ENCODE measurements at regions of chr11 and their contacts with region 1.

Region 1: GRCh38 chr11:44911029-44911814 is 39.5 kb downstream of the TP53I11 start:
- DNase-seq: peak; percentile 77 to 92 (median 85)
- H3K4me3 ChIP-seq: no peak overlapping the region
- H3K27ac ChIP-seq: no peak overlapping the region
- H3K4me1 ChIP-seq: no peaks in the 10 kb centered on the region
- H3K27me3 ChIP-seq: no peaks in the 10 kb centered on the region
- CTCF ChIP-seq: peak; percentile 74 to 78 (median 76)
- EP300 ChIP-seq: no peak
- POLR2A ChIP-seq: no peak

Region 2: GRCh38 chr11:44550123-44550522 is 361.1 kb before region 1 on chr11:
- intact Hi-C with region 1: loop called (anchors 5 kb)
- DNase-seq: no peak
- H3K4me3 ChIP-seq: no peak overlapping the region
- H3K27ac ChIP-seq: no peak overlapping the region
- H3K4me1 ChIP-seq: no peaks in the 10 kb centered on the region
- H3K27me3 ChIP-seq: no peaks in the 10 kb centered on the region
- CTCF ChIP-seq: no peak
- EP300 ChIP-seq: no peak
- POLR2A ChIP-seq: no peak

Region 3: DNA sequence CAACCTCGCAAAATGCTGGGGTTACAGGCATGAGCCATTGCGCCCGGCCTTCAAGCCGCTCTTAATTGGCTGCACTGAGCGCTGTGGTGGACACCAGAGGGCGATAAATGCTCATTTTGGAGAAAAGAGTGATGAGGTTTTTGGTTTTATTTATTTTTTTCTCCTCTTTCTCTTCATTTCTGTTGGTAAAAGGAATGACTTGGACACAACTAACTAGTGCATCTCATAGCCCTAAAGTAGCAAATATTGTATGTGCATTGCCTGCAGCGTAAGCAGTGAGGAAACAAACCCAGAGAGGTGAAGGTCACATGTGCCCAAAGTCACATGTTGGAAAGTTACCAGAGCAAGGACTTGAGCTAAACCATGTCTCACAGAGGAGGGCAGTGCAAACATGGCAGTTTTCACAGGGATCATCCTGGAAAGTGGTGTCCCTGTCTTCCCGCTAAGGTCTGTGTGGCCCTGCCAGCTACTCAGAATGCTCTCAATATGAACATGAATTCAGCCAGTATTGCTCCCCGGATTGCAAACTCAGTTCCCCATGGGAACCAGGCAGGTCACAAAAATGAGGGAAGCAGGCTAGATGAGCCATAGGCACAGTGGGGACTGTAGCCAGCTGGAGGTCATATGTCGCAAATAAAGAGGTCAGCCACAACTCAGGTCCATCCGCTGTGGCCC is 354.4 kb before region 1 on chr11:
- intact Hi-C with region 1: loop called (anchors 5 kb)
- DNase-seq: peak; percentile 68 to 80 (median 78)
- H3K4me3 ChIP-seq: no peak overlapping the region
- H3K27ac ChIP-seq: no peak overlapping the region
- H3K4me1 ChIP-seq: no peaks in the 10 kb centered on the region
- H3K27me3 ChIP-seq: no peaks in the 10 kb centered on the region
- CTCF ChIP-seq: peak; percentile 66 to 85 (median 83)
- EP300 ChIP-seq: no peak
- POLR2A ChIP-seq: no peak

Region 4: DNA sequence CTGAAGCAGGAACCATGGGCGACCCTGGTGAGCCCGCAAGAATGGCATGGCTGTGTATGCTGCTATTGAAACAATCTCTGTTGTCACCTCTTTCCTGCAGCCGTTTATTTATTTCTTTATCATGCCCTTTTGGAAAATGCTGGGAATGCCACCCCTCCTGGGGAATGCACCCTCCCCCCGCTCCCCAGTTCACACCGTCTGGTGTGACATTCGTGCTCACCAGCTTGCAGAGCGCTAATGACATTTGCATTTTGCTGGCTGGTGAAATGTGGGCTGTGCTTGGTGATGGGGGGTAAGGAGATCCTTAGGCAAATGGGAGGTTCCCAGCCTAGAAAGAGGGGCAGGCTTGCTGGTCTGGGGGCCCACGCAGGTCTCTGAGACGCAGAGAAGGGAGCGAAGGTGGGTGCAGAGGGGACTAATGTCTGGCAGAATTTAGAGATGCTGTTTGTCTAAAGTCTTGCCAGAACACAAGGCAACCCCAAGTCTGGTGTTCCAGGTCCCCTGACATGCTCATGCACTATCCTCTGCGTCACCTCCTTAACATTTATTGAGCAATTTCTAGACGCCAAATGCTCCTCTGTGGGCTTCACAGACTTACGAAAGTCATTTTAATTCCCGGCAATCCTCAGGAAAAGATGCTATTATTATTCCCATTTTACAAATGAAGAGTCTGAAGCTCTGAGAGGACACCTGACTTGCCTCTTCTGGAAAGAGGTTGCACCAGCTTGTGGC is 52.3 kb before region 1 on chr11:
- intact Hi-C with region 1: no loop called
- DNase-seq: no peak
- H3K4me3 ChIP-seq: no peak overlapping the region
- H3K27ac ChIP-seq: no peak overlapping the region
- H3K4me1 ChIP-seq: peaks cover 8% of the 10 kb centered on the region
- H3K27me3 ChIP-seq: no peaks in the 10 kb centered on the region
- CTCF ChIP-seq: no peak
- EP300 ChIP-seq: no peak
- POLR2A ChIP-seq: no peak